H1 (cell line): ENCODE measurements at regions of chr22 and their contacts with region 1.

Region 1: GRCh38 chr22:39428578-39429071 is 28.2 kb upstream of the MGAT3 start:
- DNase-seq: peak; percentile 80 to 85
- H3K4me3 ChIP-seq: peak overlapping the region in 2 of 4 experiments; percentile 19 to 32; a peak in 2 of 8 replicates
- H3K27ac ChIP-seq: peak overlapping the region; percentile 46; the same call in 1 of the 2 replicates
- H3K4me1 ChIP-seq: peaks cover 8 to 23% (median 17%) of the 10 kb centered on the region in 4 experiments
- H3K27me3 ChIP-seq: no peaks in the 10 kb centered on the region
- CTCF ChIP-seq: peak in 2 of 3 experiments; percentile 43 to 52; a peak in 3 of 4 replicates
- EP300 ChIP-seq: peak; percentile 27 to 90; a peak in 2 of 3 replicates
- POLR2A ChIP-seq: peak in 1 of 2 experiments; percentile 50; a peak in 1 of 3 replicates
- RAD21 ChIP-seq: peak; percentile 38 to 43

Region 2: DNA sequence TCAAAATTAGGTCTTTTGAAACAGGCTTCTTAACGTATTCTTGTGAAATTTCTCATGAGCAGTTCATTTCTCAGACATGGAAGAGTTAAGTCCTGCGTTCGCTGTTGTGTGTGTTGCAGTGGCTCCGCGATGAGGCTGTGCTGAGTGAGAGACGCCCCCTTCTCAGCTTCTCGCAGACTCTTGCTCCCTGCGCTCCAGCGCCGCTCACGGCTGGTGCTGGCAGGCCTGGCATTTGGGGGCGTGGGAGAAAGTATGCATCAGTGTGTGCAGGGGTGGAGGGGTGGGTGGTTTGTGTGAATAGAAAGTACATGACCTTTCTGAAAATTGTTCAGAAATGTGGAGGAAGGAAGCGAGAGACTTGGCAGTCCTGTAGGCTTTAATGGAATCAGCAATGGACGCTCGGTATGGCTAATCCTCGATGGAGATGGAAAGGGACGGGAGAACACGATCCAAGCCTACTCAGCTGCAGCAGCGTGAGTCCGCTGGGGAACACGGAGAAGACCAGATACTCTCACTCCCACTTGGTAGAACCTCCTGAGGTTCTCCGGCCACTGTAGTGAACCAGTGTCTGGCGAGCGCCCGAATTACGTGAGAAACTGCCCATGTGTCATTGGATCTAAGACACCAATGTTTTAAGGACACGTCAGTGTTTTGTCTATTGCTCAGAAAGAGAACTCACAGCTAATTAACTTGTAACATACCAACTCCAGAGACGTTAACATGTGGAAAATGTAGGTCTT is 23.1 kb before region 1 on chr22:
- CTCF ChIA-PET with region 1: interaction called, 7 read pairs
- POLR2A ChIA-PET with region 1: interaction called, 13 read pairs
- DNase-seq: no peak
- H3K4me3 ChIP-seq: no peak overlapping the region
- H3K27ac ChIP-seq: no peak overlapping the region
- H3K4me1 ChIP-seq: peaks cover 0 to under 1% (median under 1%) of the 10 kb centered on the region in 4 experiments; a peak in 2 of 7 replicates
- H3K27me3 ChIP-seq: no peaks in the 10 kb centered on the region
- CTCF ChIP-seq: no peak
- EP300 ChIP-seq: no peak
- POLR2A ChIP-seq: no peak
- RAD21 ChIP-seq: no peak